SK-N-SH (cell line): ENCODE measurements at regions of chr1 and their contacts with region 1.

Region 1: DNA sequence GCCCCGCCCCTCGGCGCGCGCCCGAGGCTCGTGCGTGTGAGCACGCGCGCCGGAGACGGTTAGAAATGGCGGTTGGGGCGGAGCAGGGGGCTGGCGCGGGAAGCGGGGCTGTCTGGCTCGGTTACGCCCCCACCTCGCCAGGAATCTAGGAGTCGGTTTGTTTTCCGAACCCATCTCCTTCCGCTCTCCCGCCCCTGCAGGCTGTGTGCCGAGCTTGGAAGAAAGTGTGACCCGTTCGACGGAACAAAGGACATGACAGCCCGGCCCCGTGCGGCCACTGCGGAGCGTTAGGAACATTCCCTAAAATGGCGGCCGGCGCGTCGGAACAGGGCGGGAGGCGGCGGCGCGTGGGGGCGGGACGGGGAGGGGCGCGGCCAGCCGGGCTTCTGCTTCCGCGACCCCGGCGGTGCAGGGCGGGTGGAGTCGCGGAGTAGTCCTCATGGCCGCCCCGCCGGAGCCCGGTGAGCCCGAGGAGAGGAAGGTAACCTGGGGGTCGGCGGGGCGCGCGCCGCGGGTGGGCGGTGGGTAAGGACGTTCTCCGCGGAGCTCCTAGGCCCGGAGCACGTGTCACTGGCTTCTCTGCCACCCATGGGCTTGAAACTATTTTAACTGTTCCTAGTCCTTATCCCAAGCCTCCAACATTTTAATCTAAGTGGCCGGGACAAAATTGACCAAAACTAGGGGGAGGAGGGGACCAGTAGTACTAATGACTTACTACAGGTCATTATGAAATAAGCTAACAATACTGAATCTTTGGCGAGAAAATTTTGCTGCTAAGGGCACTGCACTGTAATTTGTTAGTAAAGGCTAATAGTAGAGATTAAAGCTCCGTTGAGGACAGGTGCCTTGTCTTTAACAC is at the start of gene COX20:
- DNase-seq: peak; percentile 88
- H3K4me3 ChIP-seq: peak within 1 kb of the TSS; percentile 71 to 83
- H3K27ac ChIP-seq: peak within 1 kb of the TSS; percentile 97 to 99
- H3K4me1 ChIP-seq: peaks cover 13 to 15% of the 10 kb centered on the region in 2 experiments; a peak in 3 of 4 replicates
- H3K27me3 ChIP-seq: no peaks in the 10 kb centered on the region
- CTCF ChIP-seq: no peak
- EP300 ChIP-seq: peak; percentile 20 to 38; a peak in 1 of 4 replicates
- RAD21 ChIP-seq: no peak
- polyA plus RNA-seq, gene COX20: 24.8 and 29.0 TPM in 2 replicates

Region 2: DNA sequence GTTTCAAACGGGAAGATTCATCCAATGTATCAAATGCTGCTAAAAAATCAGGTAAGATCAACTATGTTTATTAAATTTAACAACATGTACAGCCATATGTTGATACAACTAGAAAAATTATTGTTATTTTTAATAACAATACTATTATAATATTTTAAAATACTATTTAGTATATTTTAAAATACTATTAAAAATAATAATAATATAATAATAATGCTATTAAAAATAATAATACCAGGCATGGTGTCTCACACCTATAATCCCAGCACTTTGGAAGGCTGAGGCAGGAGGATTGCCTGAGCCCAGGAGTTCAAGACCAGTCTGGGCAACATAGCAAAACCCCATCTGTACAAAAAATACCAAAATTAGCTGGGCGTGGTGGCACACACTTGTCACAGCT is 319.8 kb before region 1 on chr1:
- CTCF ChIA-PET with region 1: no interaction called
- POLR2A ChIA-PET with region 1: no interaction called
- DNase-seq: no peak
- H3K4me3 ChIP-seq: no peak overlapping the region
- H3K27ac ChIP-seq: no peak overlapping the region
- H3K4me1 ChIP-seq: no peaks in the 10 kb centered on the region
- H3K27me3 ChIP-seq: no peaks in the 10 kb centered on the region
- CTCF ChIP-seq: no peak
- EP300 ChIP-seq: no peak
- RAD21 ChIP-seq: no peak

Region 3: DNA sequence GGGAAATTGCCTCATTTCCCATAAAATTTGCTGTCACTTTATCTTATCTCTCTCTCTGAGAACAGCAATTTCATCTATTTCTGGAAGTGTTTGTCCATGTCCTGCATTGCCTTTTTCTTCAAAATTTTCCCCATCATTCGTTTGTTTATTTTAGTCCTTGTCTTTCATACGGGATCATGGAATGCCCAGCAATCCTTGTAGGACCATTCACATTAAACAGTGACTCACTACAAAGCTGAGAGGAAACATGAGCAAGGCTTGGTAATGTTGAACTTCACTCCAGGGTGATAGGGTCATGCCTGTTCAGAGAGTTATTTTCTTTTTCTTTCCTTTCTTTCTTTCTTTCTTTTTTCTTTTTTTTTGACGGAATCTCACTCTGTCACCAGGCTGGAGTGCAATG is 61.0 kb after region 1 on chr1:
- CTCF ChIA-PET with region 1: no interaction called
- POLR2A ChIA-PET with region 1: no interaction called
- DNase-seq: no peak
- H3K4me3 ChIP-seq: no peak overlapping the region
- H3K27ac ChIP-seq: no peak overlapping the region; a peak in 1 of 4 replicates
- H3K4me1 ChIP-seq: no peaks in the 10 kb centered on the region; a peak in 1 of 4 replicates
- H3K27me3 ChIP-seq: no peaks in the 10 kb centered on the region
- CTCF ChIP-seq: no peak
- EP300 ChIP-seq: no peak
- RAD21 ChIP-seq: no peak

Region 4: GRCh38 chr1:244937099-244937498 is 101.6 kb after region 1 on chr1:
- CTCF ChIA-PET with region 1: no interaction called
- POLR2A ChIA-PET with region 1: no interaction called
- DNase-seq: no peak
- H3K4me3 ChIP-seq: no peak overlapping the region
- H3K27ac ChIP-seq: no peak overlapping the region
- H3K4me1 ChIP-seq: no peaks in the 10 kb centered on the region
- H3K27me3 ChIP-seq: no peaks in the 10 kb centered on the region; the same call in 1 of the 2 replicates
- CTCF ChIP-seq: no peak
- EP300 ChIP-seq: no peak
- RAD21 ChIP-seq: no peak

Region 5: DNA sequence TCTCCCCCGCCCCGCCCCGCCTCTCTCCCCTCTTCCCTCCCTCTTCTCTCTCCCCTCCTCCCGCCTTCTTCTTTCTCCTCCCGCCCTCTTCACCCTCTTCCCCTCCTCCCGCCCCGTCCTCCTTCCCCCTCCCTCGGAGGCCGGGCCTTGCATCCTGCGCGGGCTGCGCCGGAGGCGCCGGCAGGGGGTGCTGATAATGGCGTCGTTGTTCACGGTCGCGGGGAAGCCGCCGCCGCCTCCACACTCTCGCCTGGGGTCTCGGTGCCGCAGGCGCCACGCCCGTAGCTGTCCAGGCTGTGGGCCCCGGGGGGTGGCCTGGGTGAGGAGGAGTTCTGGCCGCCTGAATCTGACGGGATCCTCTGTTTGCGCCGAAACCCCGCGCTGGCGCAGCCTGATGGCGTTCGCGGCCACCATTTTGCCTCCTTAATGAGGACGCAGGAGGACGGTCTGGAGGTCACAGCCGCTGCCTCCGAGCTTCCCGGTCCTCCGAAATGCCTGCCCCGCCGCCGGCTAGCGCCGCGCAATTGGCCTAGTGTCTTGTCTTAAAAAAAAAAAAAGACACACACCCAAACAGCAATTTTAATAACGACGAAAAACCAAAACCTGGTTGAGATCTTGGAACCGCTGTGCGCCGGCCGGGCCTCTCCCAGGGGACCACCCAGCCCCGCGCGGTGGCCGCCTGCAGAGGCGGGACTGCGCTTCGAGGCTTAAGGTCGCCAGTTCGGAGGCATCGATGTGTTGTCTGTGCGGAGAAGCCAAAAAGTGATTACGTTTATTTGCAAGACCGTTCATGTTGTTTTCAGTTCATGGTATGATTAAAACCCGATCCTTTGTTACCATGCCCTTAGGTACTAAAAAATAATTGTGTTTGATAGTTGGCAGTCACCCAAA is 135.4 kb after region 1 on chr1:
- CTCF ChIA-PET with region 1: interaction called, 6 read pairs
- POLR2A ChIA-PET with region 1: interaction called, 23 read pairs
- DNase-seq: peak; percentile 90
- H3K4me3 ChIP-seq: peak overlapping the region; percentile 74 to 76
- H3K27ac ChIP-seq: peak overlapping the region; percentile 99 to 100
- H3K4me1 ChIP-seq: peaks cover 13 to 14% of the 10 kb centered on the region in 2 experiments; a peak in 3 of 4 replicates
- H3K27me3 ChIP-seq: no peaks in the 10 kb centered on the region
- CTCF ChIP-seq: peak; percentile 68
- EP300 ChIP-seq: peak in 1 of 2 experiments; percentile 6; a peak in 1 of 4 replicates
- RAD21 ChIP-seq: no peak; the same call in 1 of the 2 replicates

Region 6: GRCh38 chr1:245263529-245264095 is 428.1 kb after region 1 on chr1:
- CTCF ChIA-PET with region 1: no interaction called
- POLR2A ChIA-PET with region 1: no interaction called
- DNase-seq: no peak
- H3K4me3 ChIP-seq: no peak overlapping the region
- H3K27ac ChIP-seq: no peak overlapping the region
- H3K4me1 ChIP-seq: peaks cover 0 to 26% of the 10 kb centered on the region in 2 experiments; a peak in 1 of 4 replicates
- H3K27me3 ChIP-seq: no peaks in the 10 kb centered on the region
- CTCF ChIP-seq: no peak
- EP300 ChIP-seq: no peak
- RAD21 ChIP-seq: no peak